Ovary (tissue), 10 donors: ENCODE measurements at regions of chr9 and their contacts with region 1.

Region 1: GRCh38 chr9:12884737-12885414 is 110.1 kb downstream of the LURAP1L start:
- DNase-seq: no peak
- H3K4me3 ChIP-seq: no peak overlapping the region
- H3K27ac ChIP-seq: no peak overlapping the region
- H3K4me1 ChIP-seq: no peaks in the 10 kb centered on the region
- H3K27me3 ChIP-seq: no peaks in the 10 kb centered on the region
- CTCF ChIP-seq: peak in 2 of 3 donors; percentile 28 to 47
- EP300 ChIP-seq: no peak
- POLR2A ChIP-seq: no peak

Region 2: DNA sequence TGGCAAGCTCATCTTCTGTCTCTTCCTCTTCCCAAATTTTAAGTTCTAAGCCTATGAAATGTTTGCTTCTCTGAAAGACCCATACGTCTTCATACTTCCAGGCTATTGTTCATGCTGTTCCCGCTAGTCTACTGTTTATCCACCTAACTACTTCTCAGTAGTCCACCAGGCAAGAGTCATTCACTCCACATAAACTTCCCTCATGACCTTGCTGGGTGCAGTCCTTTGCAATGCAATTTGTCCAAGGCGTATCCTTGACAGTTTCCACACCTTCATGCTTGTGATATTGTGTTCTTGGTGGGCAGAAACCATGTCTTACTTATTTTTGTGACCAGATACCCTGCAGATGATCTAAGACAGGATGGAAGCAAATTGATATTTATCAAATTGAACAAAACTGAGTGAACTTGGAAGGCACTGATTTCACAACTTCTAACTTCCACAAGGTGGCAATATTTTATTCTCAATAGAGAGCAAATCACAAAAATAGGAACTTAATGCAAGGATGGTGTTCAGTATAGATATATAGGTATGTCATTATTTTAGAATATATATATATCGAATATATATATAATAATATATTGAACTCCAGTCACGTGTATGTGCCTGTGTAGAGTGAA is 161.4 kb before region 1 on chr9:
- intact Hi-C with region 1: loop called (anchors 5 to 10 kb)
- DNase-seq: no peak
- H3K4me3 ChIP-seq: no peak overlapping the region
- H3K27ac ChIP-seq: no peak overlapping the region
- H3K4me1 ChIP-seq: no peaks in the 10 kb centered on the region
- H3K27me3 ChIP-seq: no peaks in the 10 kb centered on the region
- CTCF ChIP-seq: peak in 1 of 3 donors; percentile 32
- EP300 ChIP-seq: no peak
- POLR2A ChIP-seq: no peak

Region 3: DNA sequence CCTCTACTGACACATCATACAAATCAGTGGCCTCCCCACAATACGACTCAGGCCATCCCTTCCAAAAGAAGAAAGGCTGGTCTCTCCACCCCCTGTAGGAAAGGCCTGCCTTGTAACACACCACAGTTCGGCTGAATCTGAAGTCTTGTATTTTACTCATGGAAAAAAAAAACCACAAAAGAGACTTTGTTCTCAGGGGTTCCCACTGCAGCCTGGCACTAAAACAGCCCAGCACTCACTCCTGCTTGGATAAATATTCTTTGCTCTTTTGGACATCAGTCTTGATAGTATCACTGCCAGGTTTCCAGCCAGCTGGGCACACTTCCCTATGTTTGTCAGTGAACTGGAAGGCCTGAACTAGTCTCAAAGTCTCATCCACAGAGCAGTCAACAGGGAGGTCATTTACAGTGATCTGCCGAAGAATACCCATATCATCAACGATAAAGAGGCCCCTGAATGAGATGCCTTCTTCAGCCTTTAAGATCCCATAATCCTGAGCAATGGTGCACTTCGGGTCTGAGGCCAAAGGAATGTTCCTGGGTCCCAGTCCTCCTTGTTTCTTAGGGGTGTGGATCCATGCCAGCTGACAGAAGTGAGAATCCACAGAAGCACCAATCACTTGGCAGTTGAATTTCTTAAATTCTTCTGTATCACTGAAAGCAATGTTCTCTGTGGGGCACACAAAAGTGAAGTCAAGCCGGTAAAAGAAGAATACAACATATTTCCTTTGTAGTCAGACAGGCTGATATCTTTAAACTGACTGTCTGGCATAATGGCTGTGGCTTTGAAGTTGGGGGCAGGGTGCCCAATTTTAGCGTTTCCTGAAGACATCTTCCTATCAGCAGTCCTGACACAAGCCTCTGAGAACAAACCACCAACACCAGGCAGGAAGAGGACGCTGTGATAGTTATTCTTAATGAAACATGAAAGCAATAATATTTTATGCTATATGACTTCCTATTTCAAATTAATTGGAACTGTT is 88.0 kb after region 1 on chr9:
- intact Hi-C with region 1: no loop called
- DNase-seq: no peak
- H3K4me3 ChIP-seq: no peak overlapping the region
- H3K27ac ChIP-seq: no peak overlapping the region
- H3K4me1 ChIP-seq: no peaks in the 10 kb centered on the region
- H3K27me3 ChIP-seq: no peaks in the 10 kb centered on the region
- CTCF ChIP-seq: no peak
- EP300 ChIP-seq: no peak
- POLR2A ChIP-seq: no peak

Region 4: DNA sequence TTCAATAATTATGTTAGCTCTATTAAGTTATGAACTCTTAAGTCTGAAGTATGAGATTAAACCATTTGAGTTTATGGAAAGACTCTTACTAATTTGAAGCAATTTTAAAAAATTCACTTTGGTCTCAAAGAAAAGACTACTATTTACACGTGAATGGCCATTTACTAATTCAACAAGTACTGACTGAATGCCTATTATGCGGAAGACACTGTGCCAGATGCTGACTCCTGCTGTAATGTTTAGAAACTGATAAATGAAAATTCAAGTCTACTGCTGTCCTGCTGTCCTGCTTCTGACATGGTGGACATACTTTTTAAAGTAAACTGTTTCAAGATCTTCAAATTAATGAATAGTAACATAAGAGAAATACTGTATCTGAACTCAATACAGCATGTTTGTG is 278.4 kb after region 1 on chr9:
- intact Hi-C with region 1: no loop called
- DNase-seq: no peak
- H3K4me3 ChIP-seq: no peak overlapping the region
- H3K27ac ChIP-seq: no peak overlapping the region
- H3K4me1 ChIP-seq: no peaks in the 10 kb centered on the region
- H3K27me3 ChIP-seq: no peaks in the 10 kb centered on the region
- CTCF ChIP-seq: no peak
- EP300 ChIP-seq: no peak
- POLR2A ChIP-seq: no peak

Region 5: DNA sequence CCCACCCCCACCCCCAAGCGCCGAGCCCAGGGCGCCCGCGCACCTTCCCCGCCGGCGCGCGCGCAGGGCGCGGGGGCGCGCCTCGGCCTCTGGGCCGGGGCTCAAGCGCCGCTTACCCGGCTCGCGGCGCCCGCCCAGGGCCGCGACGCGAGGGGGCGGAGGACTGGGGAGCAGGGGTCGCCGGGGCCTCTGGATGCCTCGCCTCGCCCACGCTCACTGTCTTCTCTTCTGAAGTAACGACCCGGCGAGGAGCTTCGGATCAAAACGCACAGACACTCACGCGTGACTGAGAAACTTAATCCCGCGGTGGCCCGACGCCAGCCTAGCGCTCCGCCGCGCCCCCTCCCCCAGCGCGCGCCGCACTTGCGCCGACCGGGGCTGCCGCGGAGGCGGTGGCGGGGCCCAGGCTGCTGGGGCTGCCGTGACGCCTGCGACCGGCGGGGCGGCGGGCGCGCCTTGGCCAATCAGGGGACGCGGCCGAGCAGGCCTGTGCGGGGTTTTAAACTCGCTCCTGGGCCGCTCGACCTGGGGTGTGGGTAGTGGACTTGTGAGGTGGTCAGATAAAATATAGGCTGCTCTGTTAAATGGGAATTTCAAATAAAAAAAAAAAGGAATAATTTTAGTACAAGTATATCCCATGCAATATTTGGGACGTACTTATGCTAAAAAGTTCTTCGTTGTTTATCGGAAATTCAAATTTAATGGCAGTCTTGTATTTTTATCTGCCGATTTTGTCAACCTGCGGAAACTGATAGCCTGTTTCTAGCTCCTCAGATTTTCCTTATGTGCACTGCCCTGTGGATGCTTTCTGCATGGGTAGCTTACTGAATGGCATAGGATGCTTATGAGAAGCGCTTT is 394.6 kb after region 1 on chr9 and contains the start of gene MPDZ:
- intact Hi-C with region 1: no loop called
- DNase-seq: peak; percentile 66 to 87 (median 78)
- H3K4me3 ChIP-seq: peak within 1 kb of the TSS; percentile 67
- H3K27ac ChIP-seq: peak within 1 kb of the TSS; percentile 86 to 96
- H3K4me1 ChIP-seq: peaks cover 2% of the 10 kb centered on the region
- H3K27me3 ChIP-seq: no peaks in the 10 kb centered on the region
- CTCF ChIP-seq: peak in 1 of 3 donors; percentile 29
- EP300 ChIP-seq: no peak
- POLR2A ChIP-seq: peak; percentile 54
- total RNA-seq, gene MPDZ: 37.3 to 69.2 (median 49.6) TPM

Region 6: DNA sequence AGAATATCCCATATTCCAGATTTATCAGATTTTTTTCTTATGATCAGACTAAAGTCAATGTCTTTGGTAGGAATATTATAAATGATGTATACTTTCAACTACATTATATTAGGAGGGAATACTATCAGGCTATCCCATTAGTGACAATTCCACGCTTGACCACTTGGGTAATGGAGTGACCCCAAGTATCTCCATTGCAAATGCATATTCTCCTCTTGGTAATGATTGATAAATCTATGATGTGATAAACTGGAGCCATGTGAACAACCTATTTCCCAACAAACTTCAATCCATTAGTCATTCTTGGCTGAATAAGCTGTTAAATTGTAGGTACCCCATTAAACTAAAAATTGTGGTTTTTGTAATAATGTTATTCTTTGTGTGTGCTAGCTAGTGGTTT is 406.8 kb after region 1 on chr9:
- intact Hi-C with region 1: no loop called
- DNase-seq: no peak
- H3K4me3 ChIP-seq: no peak overlapping the region
- H3K27ac ChIP-seq: no peak overlapping the region
- H3K4me1 ChIP-seq: no peaks in the 10 kb centered on the region
- H3K27me3 ChIP-seq: no peaks in the 10 kb centered on the region
- CTCF ChIP-seq: no peak
- EP300 ChIP-seq: no peak
- POLR2A ChIP-seq: no peak